Heart right ventricle (tissue), 16 donors: ENCODE measurements at regions of chr13 and their contacts with region 1.

Region 1: DNA sequence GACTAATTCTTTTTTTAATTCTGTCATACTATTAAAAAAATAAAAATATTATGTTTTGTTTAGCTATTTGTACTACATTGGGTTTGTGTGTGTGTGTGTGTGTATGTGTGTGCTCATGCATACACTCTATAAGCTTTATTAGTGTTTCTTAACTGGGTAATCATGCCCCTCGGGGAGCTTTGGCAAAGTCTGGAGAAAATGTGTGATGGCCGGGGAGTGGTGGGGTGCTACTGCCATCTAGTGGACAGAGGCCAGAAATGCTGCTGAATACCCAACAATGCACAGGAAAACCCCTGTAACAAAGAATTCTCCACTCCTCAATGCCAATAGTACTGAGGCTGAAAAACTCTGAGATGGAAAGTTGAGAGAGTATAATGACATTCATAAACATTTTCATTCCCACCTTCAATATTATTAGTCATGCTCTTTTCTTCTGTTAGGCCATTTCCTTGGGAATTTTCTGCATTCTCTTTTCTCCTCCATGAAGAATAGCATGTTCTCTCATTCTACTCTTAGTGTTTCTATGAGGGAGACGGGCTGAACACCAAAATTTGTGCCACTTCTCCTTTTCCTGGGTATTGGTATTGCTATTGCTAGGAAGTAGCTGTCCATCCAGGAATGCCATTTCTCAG is 157.3 kb downstream of the DNAJC3 start:
- DNase-seq: peak; percentile 40 to 44
- ATAC-seq: peak in 7 of 8 donors; percentile 64 to 87 (median 73)
- H3K4me3 ChIP-seq: no peak overlapping the region
- H3K27ac ChIP-seq: no peak overlapping the region
- H3K4me1 ChIP-seq: peaks cover 0 to 8% (median 6%) of the 10 kb centered on the region in 9 donors
- H3K27me3 ChIP-seq: no peaks in the 10 kb centered on the region
- CTCF ChIP-seq: peak; percentile 82 to 96 (median 93)

Region 2: GRCh38 chr13:95181586-95181985 is 652.7 kb before region 1 on chr13:
- intact Hi-C with region 1: loop called in 3 of 10 experiments (anchors 5 to 10 kb)
- DNase-seq: no peak
- ATAC-seq: no peak
- H3K4me3 ChIP-seq: no peak overlapping the region
- H3K27ac ChIP-seq: peak overlapping the region in 1 of 10 donors; percentile 31
- H3K4me1 ChIP-seq: peaks cover 0 to 19% (median 11%) of the 10 kb centered on the region in 9 donors
- H3K27me3 ChIP-seq: no peaks in the 10 kb centered on the region
- CTCF ChIP-seq: no peak

Region 3: GRCh38 chr13:95494082-95494681 is 340.1 kb before region 1 on chr13:
- intact Hi-C with region 1: loop called in 4 of 10 experiments (anchors 5 to 10 kb)
- DNase-seq: peak in 1 of 2 donors; percentile 16
- ATAC-seq: no peak
- H3K4me3 ChIP-seq: no peak overlapping the region
- H3K27ac ChIP-seq: no peak overlapping the region
- H3K4me1 ChIP-seq: peaks cover 0 to 16% (median 0%) of the 10 kb centered on the region in 9 donors
- H3K27me3 ChIP-seq: no peaks in the 10 kb centered on the region
- CTCF ChIP-seq: peak; percentile 17 to 76 (median 69)

Region 4: DNA sequence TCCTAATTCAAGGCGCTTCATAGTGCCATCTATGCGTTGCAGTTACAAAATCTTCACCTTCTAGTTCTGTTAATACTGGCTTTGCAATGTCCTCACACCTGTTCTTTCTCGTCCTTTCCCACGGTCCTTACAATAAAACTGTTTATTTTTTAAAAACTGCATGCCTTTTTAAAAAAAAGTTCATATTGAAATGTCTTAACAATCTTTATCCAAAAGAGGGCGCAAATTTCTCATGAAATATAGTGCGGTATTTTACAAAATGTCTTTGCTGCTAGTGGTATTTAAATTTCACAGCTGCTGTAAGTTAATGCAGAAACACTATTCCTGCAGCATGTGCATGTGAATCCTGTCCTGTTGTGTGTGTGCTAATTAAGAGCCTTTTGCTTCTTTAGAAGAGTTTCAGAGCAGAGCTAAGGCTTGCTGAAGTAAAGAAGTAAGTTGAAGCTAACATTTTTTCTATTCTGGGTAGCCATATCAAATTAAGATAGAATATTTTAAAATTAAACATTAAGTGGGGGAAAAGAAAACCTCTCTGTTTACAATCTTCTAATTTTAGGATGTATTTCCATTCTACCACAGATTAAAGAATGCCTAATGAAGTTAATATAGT is 297.5 kb before region 1 on chr13:
- intact Hi-C with region 1: loop called in 6 of 10 experiments (anchors 5 to 10 kb)
- DNase-seq: no peak
- ATAC-seq: no peak
- H3K4me3 ChIP-seq: no peak overlapping the region
- H3K27ac ChIP-seq: no peak overlapping the region
- H3K4me1 ChIP-seq: peaks cover 0 to 18% (median 11%) of the 10 kb centered on the region in 9 donors
- H3K27me3 ChIP-seq: peaks cover 0 to 3% (median 0%) of the 10 kb centered on the region in 7 donors
- CTCF ChIP-seq: peak in 8 of 9 donors; percentile 17 to 62 (median 50)

Region 5: DNA sequence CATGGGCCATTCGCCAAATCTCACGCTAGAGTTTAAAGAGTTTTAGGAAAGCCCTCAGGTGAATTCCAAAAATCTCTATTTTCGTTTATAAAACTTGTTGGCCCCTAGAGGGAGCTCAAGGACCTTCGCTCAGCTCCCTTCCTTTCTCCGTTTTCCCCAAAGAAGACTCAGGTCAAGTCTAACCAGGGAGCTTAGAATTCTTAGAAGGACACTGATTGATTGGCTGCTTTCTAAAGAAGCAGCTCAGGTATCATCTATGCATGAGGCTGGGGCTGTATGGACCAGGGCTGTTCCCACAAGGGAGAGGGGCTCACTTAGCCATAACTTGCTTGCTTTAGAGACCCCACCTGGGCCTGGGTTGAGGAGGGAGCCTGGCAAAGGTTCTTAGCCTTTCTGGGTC is 210.2 kb before region 1 on chr13:
- intact Hi-C with region 1: loop called (anchors 1 to 10 kb)
- DNase-seq: no peak
- ATAC-seq: peak in 2 of 8 donors; percentile 35 to 61
- H3K4me3 ChIP-seq: no peak overlapping the region
- H3K27ac ChIP-seq: no peak overlapping the region
- H3K4me1 ChIP-seq: peaks cover 0 to 12% (median 6%) of the 10 kb centered on the region in 9 donors
- H3K27me3 ChIP-seq: no peaks in the 10 kb centered on the region
- CTCF ChIP-seq: peak; percentile 50 to 77 (median 67)

Region 6: DNA sequence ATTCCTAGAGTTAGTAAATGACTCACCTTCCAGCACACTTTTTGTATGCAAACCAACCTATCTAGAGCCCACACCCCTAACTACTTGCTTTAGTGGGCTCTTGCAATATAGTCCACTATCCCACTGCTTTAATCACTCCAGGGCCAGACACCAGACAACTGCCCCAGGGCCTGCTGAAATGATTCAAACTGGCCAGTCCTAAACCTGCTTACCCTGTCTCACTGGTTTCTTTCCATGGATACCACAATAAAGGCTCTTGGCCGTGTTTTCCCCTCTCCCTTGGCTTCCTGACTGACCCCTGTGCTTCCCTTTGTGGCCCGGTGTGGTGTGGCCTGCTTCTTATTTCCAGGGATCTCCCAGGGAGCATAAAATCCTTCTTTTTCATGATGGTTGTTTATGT is 270.3 kb after region 1 on chr13:
- intact Hi-C with region 1: no loop called
- DNase-seq: no peak
- ATAC-seq: no peak
- H3K4me3 ChIP-seq: no peak overlapping the region
- H3K27ac ChIP-seq: no peak overlapping the region
- H3K4me1 ChIP-seq: no peaks in the 10 kb centered on the region
- H3K27me3 ChIP-seq: peaks cover 0 to 7% (median 0%) of the 10 kb centered on the region in 7 donors
- CTCF ChIP-seq: no peak